ENCODE measurements at regions of chr14 and their contacts with region 1.

Region 1: GRCh38 chr14:87133073-87134050 is 859.6 kb downstream of the GALC start:
- DNase-seq: peak; percentile 100
- H3K4me3 ChIP-seq: peak overlapping the region in 1 of 3 experiments; percentile 23
- H3K27ac ChIP-seq: peak overlapping the region; percentile 88
- H3K4me1 ChIP-seq: peaks cover 32% of the 10 kb centered on the region
- H3K27me3 ChIP-seq: no peaks in the 10 kb centered on the region
- CTCF ChIP-seq: no peak

Region 2: GRCh38 chr14:87049950-87050349 is 83.4 kb before region 1 on chr14:
- CTCF ChIA-PET with region 1: no interaction called
- dilution Hi-C with region 1: no loop called
- in situ Hi-C with region 1: no loop called
- intact Hi-C with region 1: loop called (anchors 5 kb)
- DNase-seq: peak; percentile 75
- H3K4me3 ChIP-seq: no peak overlapping the region
- H3K27ac ChIP-seq: no peak overlapping the region
- H3K4me1 ChIP-seq: peaks cover 6% of the 10 kb centered on the region
- H3K27me3 ChIP-seq: no peaks in the 10 kb centered on the region
- CTCF ChIP-seq: peak; percentile 82 to 86

Region 3: GRCh38 chr14:87231336-87232026 is 98.1 kb after region 1 on chr14:
- CTCF ChIA-PET with region 1: no interaction called
- dilution Hi-C with region 1: no loop called
- in situ Hi-C with region 1: no loop called
- intact Hi-C with region 1: loop called (anchors 10 kb)
- DNase-seq: peak; percentile 53
- H3K4me3 ChIP-seq: no peak overlapping the region
- H3K27ac ChIP-seq: peak overlapping the region; percentile 18
- H3K4me1 ChIP-seq: peaks cover 21% of the 10 kb centered on the region
- H3K27me3 ChIP-seq: no peaks in the 10 kb centered on the region
- CTCF ChIP-seq: no peak

Region 4: GRCh38 chr14:87264272-87265195 is 131.2 kb after region 1 on chr14:
- CTCF ChIA-PET with region 1: no interaction called
- dilution Hi-C with region 1: no loop called
- in situ Hi-C with region 1: no loop called
- intact Hi-C with region 1: loop called (anchors 1 kb)
- DNase-seq: peak; percentile 86
- H3K4me3 ChIP-seq: no peak overlapping the region
- H3K27ac ChIP-seq: peak overlapping the region; percentile 82
- H3K4me1 ChIP-seq: peaks cover 23% of the 10 kb centered on the region
- H3K27me3 ChIP-seq: no peaks in the 10 kb centered on the region
- CTCF ChIP-seq: no peak

Region 5: DNA sequence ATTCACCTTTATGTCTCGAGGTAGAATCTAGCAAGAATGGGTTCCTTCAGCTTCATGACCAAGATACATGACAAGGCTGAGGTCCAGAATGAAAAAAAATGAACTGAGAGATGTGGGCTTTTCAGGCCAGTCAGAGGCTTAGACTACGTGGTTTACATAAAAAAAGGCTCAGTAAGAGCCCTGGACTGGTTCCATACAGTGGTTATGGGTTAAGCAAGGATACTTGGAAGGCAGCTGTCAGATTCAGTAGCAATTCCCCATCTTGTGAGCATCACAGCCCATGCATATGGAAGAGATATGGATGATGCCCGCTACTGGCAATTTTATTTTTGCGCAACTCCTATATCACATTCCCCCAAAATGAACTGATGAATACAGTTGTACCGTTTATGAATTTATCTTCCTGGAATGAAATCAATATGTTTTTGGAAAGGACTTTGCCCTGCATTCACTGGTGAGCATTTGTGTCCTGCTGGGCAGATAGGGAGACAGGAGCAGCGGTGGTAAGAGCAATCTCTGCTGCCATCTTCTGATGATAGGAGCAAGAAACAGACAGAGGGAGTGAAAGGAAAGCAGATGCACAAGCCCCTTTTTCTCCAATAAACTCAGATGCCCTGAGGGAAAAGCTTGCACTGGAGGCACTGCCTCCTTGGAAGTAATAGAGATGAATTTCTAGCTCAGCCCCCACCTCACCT is 579.2 kb after region 1 on chr14:
- CTCF ChIA-PET with region 1: no interaction called
- dilution Hi-C with region 1: no loop called
- in situ Hi-C with region 1: no loop called
- intact Hi-C with region 1: no loop called
- DNase-seq: no peak
- H3K4me3 ChIP-seq: no peak overlapping the region
- H3K27ac ChIP-seq: no peak overlapping the region
- H3K4me1 ChIP-seq: no peaks in the 10 kb centered on the region
- H3K27me3 ChIP-seq: no peaks in the 10 kb centered on the region
- CTCF ChIP-seq: peak in 1 of 2 donors; percentile 5

Region 6: DNA sequence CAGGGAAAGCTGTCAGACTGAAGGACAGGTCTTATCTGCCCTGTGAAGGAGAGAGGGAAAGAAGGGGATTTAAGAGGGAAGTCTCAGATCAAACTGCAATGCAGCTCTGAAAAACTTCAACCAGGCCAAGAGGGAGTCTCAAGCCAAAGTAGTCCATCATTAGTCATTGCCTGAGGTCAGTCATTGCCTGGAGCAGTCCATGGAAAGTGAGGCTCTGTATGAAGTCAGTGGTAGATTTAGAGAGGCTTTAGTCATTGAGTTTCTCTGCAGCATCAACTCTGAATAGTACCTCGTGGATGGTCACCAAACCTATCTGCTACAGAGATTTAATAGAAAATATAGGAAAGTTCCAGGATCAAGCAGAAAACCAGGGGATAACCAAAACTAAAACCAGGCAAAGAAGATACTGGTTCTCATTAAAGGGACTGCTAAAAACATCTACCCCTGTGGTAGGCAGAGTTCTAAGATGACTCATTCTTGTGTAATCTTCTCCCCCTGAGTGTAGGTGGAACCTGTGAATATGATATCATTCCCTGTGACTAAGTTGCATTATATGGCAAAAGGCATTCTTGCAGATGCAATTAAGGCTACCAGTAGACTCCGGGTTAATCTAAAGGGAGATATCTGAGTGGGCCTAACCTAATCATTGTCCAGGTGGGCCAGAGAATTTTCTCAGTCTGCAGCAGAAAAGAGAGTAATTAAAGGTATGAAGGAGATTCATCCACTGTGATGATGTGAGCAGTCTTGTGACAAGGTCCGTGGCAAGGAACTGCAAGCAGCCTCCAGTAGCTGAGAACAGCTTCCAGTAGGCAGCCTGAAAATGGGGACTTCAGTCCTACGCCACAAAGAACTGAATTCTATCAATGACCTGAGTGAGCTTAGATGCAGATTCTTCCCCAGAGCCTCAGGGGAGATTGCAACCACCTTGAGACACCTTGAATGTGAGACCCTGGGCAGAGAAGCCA is 736.5 kb after region 1 on chr14:
- CTCF ChIA-PET with region 1: interaction called, 6 read pairs
- dilution Hi-C with region 1: no loop called
- in situ Hi-C with region 1: no loop called
- intact Hi-C with region 1: loop called (anchors 10 kb)
- DNase-seq: peak; percentile 91
- H3K4me3 ChIP-seq: no peak overlapping the region
- H3K27ac ChIP-seq: peak overlapping the region; percentile 61
- H3K4me1 ChIP-seq: peaks cover 33% of the 10 kb centered on the region
- H3K27me3 ChIP-seq: no peaks in the 10 kb centered on the region
- CTCF ChIP-seq: no peak

Measured in mammary epithelial cell (primary cell).